ENCODE measurements at regions of chr5 and their contacts with region 1.

Region 1: DNA sequence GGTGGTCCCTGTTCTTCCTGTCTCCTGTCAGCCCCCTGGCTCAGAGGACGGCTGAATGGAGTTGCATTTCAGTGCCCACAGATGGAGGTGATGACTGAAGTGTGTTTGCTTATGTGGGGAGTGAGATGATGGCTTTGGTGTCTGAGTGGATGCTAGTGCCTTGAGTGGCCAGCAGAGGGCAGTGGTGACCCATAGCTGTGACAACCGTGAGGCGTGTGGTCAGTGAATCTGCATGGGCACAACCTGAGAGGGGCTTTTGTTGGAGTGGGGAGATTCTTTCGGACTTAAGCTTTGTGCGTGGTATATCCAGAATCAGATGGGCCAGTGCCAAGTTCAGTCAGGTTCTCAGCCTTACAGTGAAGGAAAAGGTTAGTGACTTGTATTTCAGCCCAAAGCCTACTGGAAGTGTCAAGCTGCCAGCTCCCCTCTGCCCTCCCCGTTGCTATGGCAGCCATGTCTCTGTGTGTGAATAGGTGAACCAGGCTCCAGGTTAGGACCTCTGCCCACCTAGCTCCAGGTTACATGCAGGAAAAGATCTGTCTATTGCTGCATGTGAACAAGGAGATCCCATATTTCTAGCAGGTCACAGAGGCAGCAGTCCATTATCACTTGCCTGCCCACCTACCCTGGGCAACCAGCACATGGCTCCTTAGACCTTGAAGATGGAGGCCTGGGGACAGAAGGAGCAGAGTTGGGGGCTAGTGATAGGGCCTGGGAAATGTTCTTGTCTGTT is 14.7 kb upstream of the CXXC5 start:
- DNase-seq: peak; percentile 72 to 89
- ATAC-seq: peak; percentile 17 to 55 (median 30)
- H3K4me3 ChIP-seq: no peak overlapping the region
- H3K4me3 Mint-ChIP-seq: no peak overlapping the region
- H3K27ac ChIP-seq: no peak overlapping the region
- H3K27ac Mint-ChIP-seq: peak overlapping the region; percentile 1 to 98
- H3K4me1 ChIP-seq: peaks cover 48% of the 10 kb centered on the region
- H3K4me1 Mint-ChIP-seq: peaks cover 33 to 45% of the 10 kb centered on the region in 2 donors
- H3K27me3 ChIP-seq: no peaks in the 10 kb centered on the region
- H3K27me3 Mint-ChIP-seq: no peaks in the 10 kb centered on the region
- CTCF ChIP-seq: peak; percentile 93

Region 2: DNA sequence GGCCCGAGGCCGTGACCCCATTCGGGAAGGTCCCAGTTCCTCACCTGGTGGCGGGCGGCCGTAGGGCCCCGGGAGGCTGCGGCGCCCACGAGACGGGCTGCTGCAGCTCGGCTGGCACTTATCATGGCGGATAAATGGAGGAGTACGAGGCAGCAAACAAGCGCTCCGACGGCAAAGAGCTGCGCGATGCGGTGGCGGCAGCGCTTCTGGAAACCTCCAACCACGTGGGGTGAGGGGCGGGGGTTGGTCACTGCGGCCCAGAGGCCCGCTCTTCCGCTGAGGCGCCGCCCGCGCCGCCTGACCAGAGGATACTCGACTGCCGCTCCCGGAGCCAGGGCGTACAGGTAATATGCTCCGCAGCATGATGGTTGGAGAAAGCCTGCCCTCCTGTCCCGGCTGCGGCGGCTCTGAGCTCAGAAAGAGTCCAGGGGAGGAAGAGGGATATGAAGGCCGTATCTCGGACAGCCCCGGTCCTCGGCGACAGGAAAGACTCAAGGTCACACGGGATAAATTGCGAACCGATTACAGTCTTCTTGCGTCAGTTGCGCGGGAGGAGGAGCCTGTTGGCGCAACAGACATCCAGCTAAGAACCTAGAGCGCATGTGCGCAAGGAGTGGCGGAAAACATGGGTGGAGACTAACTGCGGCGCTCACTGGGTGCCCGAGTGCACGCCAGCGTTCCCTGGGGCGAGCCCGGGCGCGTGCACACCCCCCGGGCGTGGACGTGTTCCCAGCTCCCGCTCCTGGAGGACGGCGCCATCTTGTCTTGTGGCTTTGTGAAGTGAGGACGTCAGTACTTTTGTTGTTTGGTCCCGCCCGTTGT is 1058.1 kb before region 1 on chr5 and contains the start of gene HSPA9:
- intact Hi-C with region 1: no loop called
- DNase-seq: peak; percentile 95 to 100
- ATAC-seq: peak; percentile 79 to 92 (median 85)
- H3K4me3 ChIP-seq: peak within 1 kb of the TSS; percentile 86
- H3K4me3 Mint-ChIP-seq: peak within 1 kb of the TSS; percentile 98
- H3K27ac ChIP-seq: peak within 1 kb of the TSS; percentile 98
- H3K27ac Mint-ChIP-seq: peak within 1 kb of the TSS; percentile 100
- H3K4me1 ChIP-seq: peaks cover 18% of the 10 kb centered on the region
- H3K4me1 Mint-ChIP-seq: peaks cover 21 to 33% of the 10 kb centered on the region in 2 donors
- H3K27me3 ChIP-seq: no peaks in the 10 kb centered on the region
- H3K27me3 Mint-ChIP-seq: no peaks in the 10 kb centered on the region
- CTCF ChIP-seq: no peak
- total RNA-seq, gene HSPA9: 272 to 308 (median 308) TPM

Region 3: DNA sequence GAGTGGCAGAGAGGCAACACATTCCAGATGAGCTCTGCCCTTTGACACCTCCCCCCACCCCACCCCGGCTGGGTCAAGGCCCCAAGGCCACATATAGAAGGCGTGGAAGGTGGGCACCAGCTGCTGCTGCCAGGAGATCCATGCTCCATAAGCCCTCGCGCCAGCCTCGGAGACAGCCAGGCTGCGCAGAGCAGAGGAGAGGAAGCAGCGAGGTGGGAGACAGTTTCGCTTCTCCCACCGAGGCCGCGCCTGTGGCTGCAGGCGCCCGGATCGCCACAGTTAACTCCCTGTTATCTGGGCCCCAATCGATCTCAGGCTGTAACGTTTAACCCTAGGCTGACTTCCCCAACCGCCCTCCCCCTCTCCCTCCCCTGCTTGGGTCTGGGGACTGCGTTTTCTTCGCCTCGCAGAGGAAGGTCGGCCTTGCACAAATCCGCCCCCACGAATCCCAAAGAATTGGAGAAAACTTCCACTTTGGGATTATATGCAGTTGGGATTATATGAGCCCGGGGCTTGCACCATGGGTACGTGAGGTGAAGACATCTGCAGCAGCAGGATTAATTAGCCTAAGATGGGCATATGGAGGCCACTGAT is 13.5 kb after region 1 on chr5:
- intact Hi-C with region 1: loop called (anchors 1 kb)
- DNase-seq: no peak
- ATAC-seq: no peak
- H3K4me3 ChIP-seq: no peak overlapping the region
- H3K4me3 Mint-ChIP-seq: peak overlapping the region; percentile 83
- H3K27ac ChIP-seq: no peak overlapping the region
- H3K27ac Mint-ChIP-seq: peak overlapping the region; percentile 5 to 94
- H3K4me1 ChIP-seq: peaks cover 68% of the 10 kb centered on the region
- H3K4me1 Mint-ChIP-seq: peaks cover 33 to 57% of the 10 kb centered on the region in 2 donors
- H3K27me3 ChIP-seq: no peaks in the 10 kb centered on the region
- H3K27me3 Mint-ChIP-seq: no peaks in the 10 kb centered on the region
- CTCF ChIP-seq: no peak

Region 4: GRCh38 chr5:139670369-139671095 is 37.1 kb after region 1 on chr5:
- intact Hi-C with region 1: loop called (anchors 1 kb)
- DNase-seq: peak; percentile 57 to 64
- ATAC-seq: peak; percentile 48 to 62 (median 60)
- H3K4me3 ChIP-seq: peak overlapping the region; percentile 70
- H3K4me3 Mint-ChIP-seq: peak overlapping the region; percentile 84
- H3K27ac ChIP-seq: peak overlapping the region; percentile 92
- H3K27ac Mint-ChIP-seq: peak overlapping the region; percentile 92 to 94
- H3K4me1 ChIP-seq: peaks cover 97% of the 10 kb centered on the region
- H3K4me1 Mint-ChIP-seq: peaks cover 59 to 89% of the 10 kb centered on the region in 2 donors
- H3K27me3 ChIP-seq: no peaks in the 10 kb centered on the region
- H3K27me3 Mint-ChIP-seq: no peaks in the 10 kb centered on the region
- CTCF ChIP-seq: peak; percentile 43

Region 5: DNA sequence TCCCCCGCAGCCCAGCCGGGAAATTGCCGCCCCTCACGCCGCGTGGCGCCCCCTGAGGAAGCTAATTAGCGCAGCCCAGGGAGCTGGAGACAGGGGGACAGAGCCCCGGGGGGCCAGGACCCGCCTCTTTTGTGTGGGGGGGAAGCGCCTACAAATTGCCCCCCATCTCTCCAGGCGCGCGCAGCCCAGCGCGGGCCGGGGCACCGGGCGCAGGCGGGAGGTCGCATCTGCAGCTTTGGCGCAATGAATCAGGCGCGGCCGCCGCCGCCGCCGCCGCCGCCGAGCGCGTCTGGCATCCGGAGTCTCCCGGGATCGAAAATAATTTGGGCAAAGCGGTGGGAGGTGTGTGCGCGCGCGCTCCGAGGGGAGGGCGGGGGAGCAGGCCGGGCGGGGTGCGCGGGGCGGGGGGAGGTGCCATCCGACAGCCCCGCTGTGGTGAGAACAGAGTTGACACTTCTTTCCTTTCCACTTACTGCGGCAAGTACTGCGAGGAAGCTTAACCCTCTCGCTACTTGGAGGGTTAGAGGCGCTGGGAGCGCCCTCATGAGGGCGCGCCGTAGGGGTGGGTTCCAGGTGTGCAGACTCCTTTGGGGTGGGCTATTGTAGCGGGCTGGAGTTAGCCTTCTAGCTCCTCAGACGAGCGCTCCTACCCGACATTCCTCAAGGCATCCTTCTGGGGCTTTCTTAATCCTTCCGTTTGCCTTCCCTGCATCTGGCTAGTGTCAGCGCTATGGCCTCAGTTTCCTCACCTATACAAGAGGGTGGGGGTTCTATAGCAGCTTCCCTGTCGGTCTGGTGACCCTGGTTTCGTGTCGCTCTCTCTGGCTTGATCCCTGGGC is 77.8 kb after region 1 on chr5:
- intact Hi-C with region 1: loop called (anchors 1 kb)
- DNase-seq: peak; percentile 71 to 84
- ATAC-seq: peak; percentile 62 to 77 (median 70)
- H3K4me3 ChIP-seq: peak overlapping the region; percentile 65
- H3K4me3 Mint-ChIP-seq: peak overlapping the region; percentile 83
- H3K27ac ChIP-seq: peak overlapping the region; percentile 97
- H3K27ac Mint-ChIP-seq: peak overlapping the region; percentile 89 to 94
- H3K4me1 ChIP-seq: peaks cover 48% of the 10 kb centered on the region
- H3K4me1 Mint-ChIP-seq: peaks cover 32 to 43% of the 10 kb centered on the region in 2 donors
- H3K27me3 ChIP-seq: no peaks in the 10 kb centered on the region
- H3K27me3 Mint-ChIP-seq: no peaks in the 10 kb centered on the region
- CTCF ChIP-seq: peak; percentile 31

Region 6: GRCh38 chr5:139740138-139740991 is 106.9 kb after region 1 on chr5:
- intact Hi-C with region 1: no loop called
- DNase-seq: no peak
- ATAC-seq: peak in 2 of 3 donors; percentile 25 to 57
- H3K4me3 ChIP-seq: no peak overlapping the region
- H3K4me3 Mint-ChIP-seq: no peak overlapping the region
- H3K27ac ChIP-seq: no peak overlapping the region
- H3K27ac Mint-ChIP-seq: peak overlapping the region in 1 of 2 donors; percentile 29
- H3K4me1 ChIP-seq: peaks cover 16% of the 10 kb centered on the region
- H3K4me1 Mint-ChIP-seq: peaks cover 5 to 40% of the 10 kb centered on the region in 2 donors
- H3K27me3 ChIP-seq: no peaks in the 10 kb centered on the region
- H3K27me3 Mint-ChIP-seq: no peaks in the 10 kb centered on the region
- CTCF ChIP-seq: no peak

Region 7: DNA sequence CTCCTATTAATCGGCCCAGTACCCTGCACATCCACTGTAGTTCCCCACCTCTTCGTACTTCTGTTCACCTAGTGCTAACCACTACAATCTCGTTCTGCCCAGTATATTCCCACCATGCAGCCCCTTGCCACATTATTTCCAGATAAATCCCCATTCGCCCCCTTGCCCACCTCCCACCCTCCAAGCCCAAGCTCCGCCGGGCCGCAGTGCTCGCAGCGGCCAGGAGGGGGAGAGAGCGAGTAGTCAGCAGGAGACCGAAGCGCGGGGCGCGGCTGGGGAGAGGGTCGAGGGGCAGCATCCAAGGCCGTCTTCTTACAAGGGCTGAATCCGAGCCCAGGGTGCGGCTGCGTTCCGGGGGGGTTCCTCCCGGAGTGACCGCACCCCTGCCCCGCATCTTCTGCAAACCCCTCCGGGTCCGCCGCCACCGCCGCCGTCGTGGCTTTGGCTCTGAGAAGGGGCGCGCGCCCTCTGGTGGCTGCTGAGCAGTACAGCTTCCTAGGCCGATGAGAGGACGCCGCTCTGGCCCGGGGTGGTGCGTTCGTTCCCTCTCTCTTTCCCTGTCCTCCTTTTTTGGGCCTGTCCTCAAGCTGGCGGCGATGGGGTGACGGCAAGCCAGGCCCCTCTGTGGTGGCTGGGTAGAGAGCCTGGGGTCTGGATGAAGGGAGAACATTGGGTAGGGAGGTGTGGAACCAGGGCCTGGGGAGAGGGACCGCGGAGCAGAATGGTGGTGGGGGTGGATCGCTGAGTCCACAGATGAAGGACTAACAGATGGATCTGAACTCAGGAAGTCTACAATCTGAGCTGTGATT is 132.2 kb after region 1 on chr5:
- intact Hi-C with region 1: loop called (anchors 1 kb)
- DNase-seq: peak; percentile 86 to 91
- ATAC-seq: peak; percentile 86 to 93 (median 88)
- H3K4me3 ChIP-seq: peak overlapping the region; percentile 59
- H3K4me3 Mint-ChIP-seq: peak overlapping the region; percentile 78
- H3K27ac ChIP-seq: peak overlapping the region; percentile 36
- H3K27ac Mint-ChIP-seq: peak overlapping the region; percentile 51 to 92
- H3K4me1 ChIP-seq: peaks cover 25% of the 10 kb centered on the region
- H3K4me1 Mint-ChIP-seq: peaks cover 13 to 26% of the 10 kb centered on the region in 2 donors
- H3K27me3 ChIP-seq: peaks cover 10% of the 10 kb centered on the region
- H3K27me3 Mint-ChIP-seq: peaks cover 0 to 6% of the 10 kb centered on the region in 2 donors
- CTCF ChIP-seq: peak; percentile 100

Region 8: GRCh38 chr5:140833997-140834723 is 1200.7 kb after region 1 on chr5 and contains the start of gene PCDHA7:
- intact Hi-C with region 1: no loop called
- DNase-seq: no peak
- ATAC-seq: no peak
- H3K4me3 ChIP-seq: no peak within 1 kb of the TSS
- H3K4me3 Mint-ChIP-seq: no peak within 1 kb of the TSS
- H3K27ac ChIP-seq: no peak within 1 kb of the TSS
- H3K27ac Mint-ChIP-seq: no peak within 1 kb of the TSS
- H3K4me1 ChIP-seq: no peaks in the 10 kb centered on the region
- H3K4me1 Mint-ChIP-seq: no peaks in the 10 kb centered on the region
- H3K27me3 ChIP-seq: peaks cover 11% of the 10 kb centered on the region
- H3K27me3 Mint-ChIP-seq: peaks cover 11 to 12% of the 10 kb centered on the region in 2 donors
- CTCF ChIP-seq: no peak
- total RNA-seq, gene PCDHA7: not detected

Measured in natural killer cell (primary cell).